ENCODE measurements at regions of chr1 and their contacts with region 1.

Region 1: GRCh38 chr1:88075813-88076212 is 608.3 kb upstream of the PKN2 start:
- DNase-seq: no peak
- H3K4me3 ChIP-seq: no peak overlapping the region
- H3K27me3 ChIP-seq: no peaks in the 10 kb centered on the region
- CTCF ChIP-seq: no peak

Region 2: GRCh38 chr1:88061492-88062177 is 14.2 kb before region 1 on chr1:
- CTCF ChIA-PET with region 1: interaction called, 11 read pairs
- POLR2A ChIA-PET with region 1: no interaction called
- DNase-seq: peak; percentile 4
- H3K4me3 ChIP-seq: no peak overlapping the region
- H3K27me3 ChIP-seq: no peaks in the 10 kb centered on the region
- CTCF ChIP-seq: peak; percentile 88